ENCODE measurements at regions of chr22 and their contacts with region 1.

Region 1: DNA sequence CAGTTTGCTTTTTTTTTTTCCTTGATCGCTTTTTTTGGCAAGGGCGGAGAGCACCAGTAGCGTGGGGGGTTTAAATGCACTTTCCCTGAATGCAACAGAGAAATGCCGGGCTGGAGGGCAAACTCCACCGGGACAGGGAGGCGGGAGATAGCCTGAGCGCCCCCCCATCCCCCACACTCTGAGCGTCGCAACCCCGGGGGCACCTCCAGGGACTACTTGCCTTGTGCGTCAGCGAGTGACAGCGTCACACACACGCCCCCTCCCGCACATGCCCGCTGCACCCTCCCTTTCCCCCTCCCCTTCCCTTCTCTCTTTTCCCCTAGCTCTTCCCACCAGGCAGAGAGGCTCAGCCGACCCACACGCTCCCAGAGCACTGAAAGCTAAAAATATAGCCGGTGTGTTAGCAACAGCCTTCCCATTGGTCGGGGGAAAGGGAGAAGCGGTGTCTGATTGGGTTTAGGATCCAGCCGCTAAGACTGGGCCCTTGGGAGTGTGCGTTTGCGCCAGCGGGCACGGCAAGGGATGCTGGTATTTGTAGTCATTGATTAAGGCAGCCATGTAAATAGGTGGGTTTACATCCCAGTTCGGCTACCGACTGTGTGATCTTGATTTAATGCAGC is 1.7 kb upstream of the TOB2 start:
- DNase-seq: peak; percentile 96
- H3K4me3 Mint-ChIP-seq: peak overlapping the region; percentile 87
- H3K27ac Mint-ChIP-seq: peak overlapping the region; percentile 94
- H3K4me1 Mint-ChIP-seq: peaks cover 9% of the 10 kb centered on the region
- H3K27me3 Mint-ChIP-seq: no peaks in the 10 kb centered on the region

Region 2: DNA sequence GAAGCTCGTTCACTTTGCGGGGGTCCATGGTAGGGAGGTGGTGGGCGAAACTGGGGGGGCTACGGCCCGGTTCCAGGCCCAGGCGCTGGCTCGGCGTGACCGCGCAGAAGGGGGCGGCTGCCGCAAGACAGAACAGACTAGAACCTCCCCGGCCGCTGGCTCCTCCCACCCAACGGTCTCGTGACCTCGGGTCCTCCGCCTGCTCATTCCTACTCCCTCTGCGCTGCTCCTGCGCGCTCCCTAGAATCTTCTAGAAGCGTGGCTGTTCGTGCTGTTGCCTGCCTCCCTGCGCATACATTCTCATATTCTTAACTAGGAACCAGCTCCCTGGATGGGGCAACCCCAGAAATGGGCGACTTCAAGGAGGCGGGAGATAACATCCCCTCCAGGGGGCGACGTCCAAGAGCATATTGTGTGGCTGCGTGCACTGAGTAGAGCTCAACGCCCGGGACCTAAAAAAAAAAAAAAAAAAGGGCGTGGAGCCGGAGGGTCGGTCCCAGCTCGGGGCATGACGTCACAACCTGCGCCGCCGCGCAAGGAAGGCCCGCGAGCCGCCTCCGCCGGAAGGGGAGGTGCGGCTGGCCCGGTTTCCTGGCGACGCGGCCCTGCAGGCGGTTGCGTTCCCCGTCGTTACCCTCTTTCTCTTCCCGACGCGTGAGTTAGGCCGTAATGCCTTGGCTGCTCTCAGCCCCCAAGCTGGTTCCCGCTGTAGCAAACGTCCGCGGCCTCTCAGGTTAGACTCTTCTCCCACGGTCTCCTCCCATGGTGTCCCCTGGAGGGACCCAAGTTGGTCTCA is 591.6 kb before region 1 on chr22 and contains the starts of genes ST13 and XPNPEP3:
- CTCF ChIA-PET with region 1: no interaction called
- intact Hi-C with region 1: loop called (anchors 10 kb)
- DNase-seq: peak; percentile 98
- H3K4me3 Mint-ChIP-seq: peak within 1 kb of the TSS; percentile 95
- H3K27ac Mint-ChIP-seq: peak within 1 kb of the TSS; percentile 99
- H3K4me1 Mint-ChIP-seq: peaks cover 51% of the 10 kb centered on the region
- H3K27me3 Mint-ChIP-seq: no peaks in the 10 kb centered on the region
- total RNA-seq, gene ST13: 240 to 254 TPM
- total RNA-seq, gene XPNPEP3: 15.7 to 19.6 TPM

Region 3: DNA sequence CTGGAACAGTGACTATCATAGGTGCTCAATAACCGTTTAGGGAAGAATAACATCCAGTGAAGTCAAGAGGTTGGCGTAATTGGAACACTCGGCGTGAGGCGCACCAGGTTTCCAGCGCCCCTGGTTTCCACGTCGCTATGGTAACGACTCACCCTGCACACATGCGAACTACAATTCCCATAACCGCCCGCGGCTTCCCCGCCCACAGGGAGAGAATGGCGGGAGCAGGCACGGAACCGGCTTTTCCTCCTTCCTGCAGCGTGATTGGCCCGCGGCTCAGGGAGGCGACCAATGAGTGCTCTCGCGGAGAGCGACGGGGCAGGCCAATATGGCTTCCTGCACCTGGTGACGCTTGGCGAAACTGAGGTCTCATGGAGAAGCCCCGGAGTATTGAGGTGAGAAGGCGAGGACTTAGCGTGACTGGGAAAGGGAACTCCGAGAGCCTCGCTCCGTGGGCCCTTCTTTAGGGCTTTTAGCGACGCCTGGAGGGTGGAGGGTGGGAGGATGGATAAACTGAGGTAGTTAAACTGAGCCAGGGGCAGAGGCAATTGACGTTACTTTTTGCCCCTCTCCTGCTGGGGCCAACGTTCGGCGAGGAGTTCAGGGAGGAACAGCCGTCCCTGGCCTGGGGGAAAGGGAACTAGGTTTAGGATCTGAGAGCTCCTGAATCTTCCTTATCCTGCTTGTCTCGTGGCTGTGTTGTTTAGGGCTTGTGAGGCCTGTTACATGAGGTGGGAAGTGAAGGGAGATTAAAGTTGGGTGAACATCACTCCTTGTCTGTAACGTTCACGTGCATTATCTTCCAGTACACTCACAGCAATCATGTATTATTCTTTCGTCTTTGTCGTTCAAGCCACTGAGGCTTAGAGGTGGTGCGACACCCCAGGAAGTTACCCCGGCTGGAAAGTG is 243.1 kb before region 1 on chr22 and contains the start of gene L3MBTL2:
- CTCF ChIA-PET with region 1: no interaction called
- intact Hi-C with region 1: loop called (anchors 1 kb)
- DNase-seq: peak; percentile 99
- H3K4me3 Mint-ChIP-seq: peak within 1 kb of the TSS; percentile 88
- H3K27ac Mint-ChIP-seq: peak within 1 kb of the TSS; percentile 86
- H3K4me1 Mint-ChIP-seq: peaks cover 33% of the 10 kb centered on the region
- H3K27me3 Mint-ChIP-seq: no peaks in the 10 kb centered on the region
- total RNA-seq, gene L3MBTL2: 19.4 to 22.3 TPM

Region 4: GRCh38 chr22:41381329-41382097 is 66.8 kb before region 1 on chr22 and contains the start of gene TEF:
- CTCF ChIA-PET with region 1: no interaction called
- intact Hi-C with region 1: loop called (anchors 1 kb)
- DNase-seq: peak; percentile 98
- H3K4me3 Mint-ChIP-seq: peak within 1 kb of the TSS; percentile 87
- H3K27ac Mint-ChIP-seq: peak within 1 kb of the TSS; percentile 95
- H3K4me1 Mint-ChIP-seq: peaks cover 13% of the 10 kb centered on the region
- H3K27me3 Mint-ChIP-seq: no peaks in the 10 kb centered on the region
- total RNA-seq, gene TEF: 1.7 to 1.9 TPM

Region 5: DNA sequence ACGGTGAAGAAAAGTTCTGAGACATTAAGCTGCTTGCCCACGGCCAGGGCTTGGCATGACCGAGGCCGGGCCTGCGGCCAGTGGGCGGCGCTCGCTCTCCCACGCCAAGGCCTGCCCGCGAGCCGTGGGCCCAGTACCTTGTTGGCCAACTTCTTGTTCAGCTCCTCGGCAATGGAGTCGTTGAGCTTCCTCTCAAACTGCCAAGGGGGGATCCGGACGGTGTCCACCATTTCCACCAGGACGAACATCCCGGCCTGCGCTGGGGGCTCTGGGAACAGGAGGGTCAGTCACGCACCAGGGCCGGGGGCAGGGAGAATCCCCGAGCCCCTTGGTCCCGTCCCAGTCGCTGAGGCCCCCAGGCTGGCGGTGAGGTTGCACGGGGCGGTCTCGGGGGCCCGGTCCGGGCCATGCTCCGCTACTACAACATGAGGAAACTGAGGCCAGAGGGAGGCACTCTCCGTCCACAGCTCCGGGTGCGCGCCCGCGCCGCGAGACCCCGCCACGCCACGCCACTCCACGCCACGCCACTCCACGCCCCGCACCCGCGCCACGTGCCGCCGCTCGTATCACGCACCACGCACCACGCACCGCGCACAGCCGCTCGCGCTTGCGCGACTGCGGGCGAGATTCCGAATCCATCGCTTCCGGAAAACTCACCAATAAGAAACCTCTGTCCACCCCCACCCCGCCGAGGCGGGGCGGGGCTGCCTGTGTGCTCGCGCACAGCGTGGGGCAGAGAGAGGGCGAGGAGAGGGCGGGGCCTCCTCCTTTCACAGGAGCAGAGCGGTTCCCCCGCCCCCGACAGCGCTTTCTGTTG is 95.8 kb after region 1 on chr22 and contains the start of gene POLR3H:
- CTCF ChIA-PET with region 1: no interaction called
- intact Hi-C with region 1: loop called (anchors 5 kb)
- DNase-seq: peak; percentile 97
- H3K4me3 Mint-ChIP-seq: peak within 1 kb of the TSS; percentile 94
- H3K27ac Mint-ChIP-seq: peak within 1 kb of the TSS; percentile 87
- H3K4me1 Mint-ChIP-seq: peaks cover 43% of the 10 kb centered on the region
- H3K27me3 Mint-ChIP-seq: no peaks in the 10 kb centered on the region
- total RNA-seq, gene POLR3H: 14.8 to 17.6 TPM

Region 6: DNA sequence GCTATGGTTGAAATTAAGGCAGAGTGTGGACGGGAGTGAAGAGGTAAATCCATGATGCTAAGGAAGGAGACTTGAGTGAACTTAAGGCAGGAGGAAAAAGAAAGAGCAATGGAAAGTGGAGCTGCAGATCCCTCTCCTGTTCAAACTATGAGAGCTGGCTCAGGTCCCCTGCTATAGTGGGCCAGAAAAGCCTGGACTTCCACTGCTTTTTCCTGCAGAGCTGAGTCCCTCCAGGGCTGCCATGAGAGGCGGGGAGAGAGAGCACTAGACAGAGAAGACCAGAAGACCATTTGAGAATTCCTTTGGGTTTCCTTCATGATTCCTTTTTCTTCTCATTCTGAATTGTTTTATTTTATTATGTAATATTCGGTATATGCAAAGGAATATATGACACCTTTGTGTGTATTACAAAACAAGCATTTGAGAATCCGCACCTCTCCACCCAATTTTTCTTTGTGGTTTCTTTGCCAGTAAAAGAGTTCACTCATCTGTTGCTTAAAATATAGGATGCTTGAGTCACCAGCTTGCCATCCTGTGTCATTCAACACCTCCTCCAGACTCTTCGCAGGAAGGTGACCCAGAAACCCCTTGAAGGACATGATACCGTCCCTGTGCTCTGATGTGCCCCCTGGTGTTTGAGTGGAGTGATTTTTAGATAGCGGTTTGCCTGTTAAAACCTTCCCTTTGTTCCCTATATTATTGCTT is 409.0 kb after region 1 on chr22:
- CTCF ChIA-PET with region 1: no interaction called
- intact Hi-C with region 1: loop called (anchors 5 kb)
- DNase-seq: peak; percentile 93
- H3K4me3 Mint-ChIP-seq: peak overlapping the region; percentile 11
- H3K27ac Mint-ChIP-seq: peak overlapping the region; percentile 95
- H3K4me1 Mint-ChIP-seq: peaks cover 77% of the 10 kb centered on the region
- H3K27me3 Mint-ChIP-seq: no peaks in the 10 kb centered on the region

Measured in activated naive CD4-positive, alpha-beta T cell treated with anti-CD3 and anti-CD28 coated beads for 36 hours (primary cell).